Sciatic nerve (tissue), 2 donors: ENCODE measurements at regions of chr9 and their contacts with region 1.

Region 1: GRCh38 chr9:98255578-98256296 is at the start of gene TBC1D2:
- DNase-seq: peak; percentile 97
- ATAC-seq: peak; percentile 98
- total RNA-seq, gene TBC1D2: 16.3 TPM

Region 2: GRCh38 chr9:98192503-98193335 is 63.0 kb before region 1 on chr9 and contains the start of gene CORO2A:
- intact Hi-C with region 1: loop called (anchors 10 kb)
- DNase-seq: peak; percentile 82
- ATAC-seq: peak; percentile 90
- total RNA-seq, gene CORO2A: 3.7 TPM